ENCODE measurements at regions of chr2 and their contacts with region 1.

Region 1: GRCh38 chr2:96856776-96857673 is 791 bp downstream of the ANKRD39 start:
- DNase-seq: no peak
- H3K4me3 Mint-ChIP-seq: peak overlapping the region; percentile 60
- H3K27ac Mint-ChIP-seq: peak overlapping the region; percentile 49
- H3K4me1 Mint-ChIP-seq: peaks cover 14% of the 10 kb centered on the region
- H3K27me3 Mint-ChIP-seq: no peaks in the 10 kb centered on the region
- CTCF ChIP-seq: no peak

Region 2: GRCh38 chr2:96099861-96100798 is 756.9 kb before region 1 on chr2:
- CTCF ChIA-PET with region 1: no interaction called
- POLR2A ChIA-PET with region 1: no interaction called
- intact Hi-C with region 1: no loop called
- DNase-seq: no peak
- H3K4me3 Mint-ChIP-seq: no peak overlapping the region
- H3K27ac Mint-ChIP-seq: no peak overlapping the region
- H3K4me1 Mint-ChIP-seq: no peaks in the 10 kb centered on the region
- H3K27me3 Mint-ChIP-seq: no peaks in the 10 kb centered on the region
- CTCF ChIP-seq: no peak

Region 3: GRCh38 chr2:96792772-96793749 is 64.0 kb before region 1 on chr2:
- CTCF ChIA-PET with region 1: no interaction called
- POLR2A ChIA-PET with region 1: no interaction called
- intact Hi-C with region 1: no loop called
- DNase-seq: no peak
- H3K4me3 Mint-ChIP-seq: no peak overlapping the region
- H3K27ac Mint-ChIP-seq: no peak overlapping the region
- H3K4me1 Mint-ChIP-seq: peaks cover 12% of the 10 kb centered on the region
- H3K27me3 Mint-ChIP-seq: no peaks in the 10 kb centered on the region
- CTCF ChIP-seq: no peak

Region 4: GRCh38 chr2:96832754-96833507 is 24.1 kb before region 1 on chr2:
- CTCF ChIA-PET with region 1: interaction called, 11 read pairs
- POLR2A ChIA-PET with region 1: interaction called, 4 read pairs
- intact Hi-C with region 1: no loop called
- DNase-seq: peak; percentile 43
- H3K4me3 Mint-ChIP-seq: no peak overlapping the region
- H3K27ac Mint-ChIP-seq: peak overlapping the region; percentile 39
- H3K4me1 Mint-ChIP-seq: peaks cover 7% of the 10 kb centered on the region
- H3K27me3 Mint-ChIP-seq: no peaks in the 10 kb centered on the region
- CTCF ChIP-seq: no peak

Region 5: DNA sequence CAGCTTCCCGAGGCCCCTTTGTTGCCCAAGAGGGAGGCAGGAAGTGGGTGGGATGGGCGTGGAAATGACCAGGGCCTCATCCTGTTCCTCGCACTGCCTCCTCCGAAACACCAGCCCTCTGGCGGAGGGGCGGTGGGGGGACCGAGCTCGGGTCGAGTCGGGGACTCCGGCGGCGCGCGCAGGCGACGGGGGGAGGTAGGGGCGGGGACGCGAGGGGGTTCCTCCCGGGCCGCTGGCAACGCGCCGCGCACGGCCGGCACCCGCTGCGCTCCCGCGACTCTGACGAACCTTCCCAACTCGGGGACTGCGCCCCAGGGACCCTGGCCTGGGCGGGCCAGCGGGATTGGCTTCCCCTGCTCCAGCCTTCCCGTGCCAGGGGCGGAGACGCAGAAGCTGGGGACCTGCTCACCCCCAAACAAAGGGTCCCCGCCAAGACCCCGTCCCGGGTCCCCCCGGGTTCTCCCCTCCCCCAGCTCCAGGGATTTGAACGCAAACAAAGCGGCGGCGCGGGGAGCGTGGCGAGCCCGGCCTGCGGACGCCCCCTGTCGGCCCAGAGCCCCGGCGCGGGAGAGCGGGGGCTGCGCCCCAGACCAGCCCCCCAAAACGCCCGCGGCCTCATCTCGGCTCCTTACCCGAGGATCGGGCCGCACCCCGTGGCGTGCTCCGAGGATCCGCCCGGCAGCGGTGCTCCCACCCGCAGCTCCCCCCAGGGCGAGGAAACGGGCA is 11.7 kb after region 1 on chr2:
- CTCF ChIA-PET with region 1: interaction called, 30 read pairs
- POLR2A ChIA-PET with region 1: interaction called, 53 read pairs
- intact Hi-C with region 1: no loop called
- DNase-seq: peak; percentile 87
- H3K4me3 Mint-ChIP-seq: peak overlapping the region; percentile 78
- H3K27ac Mint-ChIP-seq: peak overlapping the region; percentile 63
- H3K4me1 Mint-ChIP-seq: peaks cover 5% of the 10 kb centered on the region
- H3K27me3 Mint-ChIP-seq: no peaks in the 10 kb centered on the region
- CTCF ChIP-seq: peak; percentile 82

Region 6: GRCh38 chr2:96874118-96874831 is 17.2 kb after region 1 on chr2:
- CTCF ChIA-PET with region 1: interaction called, 30 read pairs
- POLR2A ChIA-PET with region 1: interaction called, 53 read pairs
- intact Hi-C with region 1: no loop called
- DNase-seq: no peak
- H3K4me3 Mint-ChIP-seq: no peak overlapping the region
- H3K27ac Mint-ChIP-seq: no peak overlapping the region
- H3K4me1 Mint-ChIP-seq: no peaks in the 10 kb centered on the region
- H3K27me3 Mint-ChIP-seq: no peaks in the 10 kb centered on the region
- CTCF ChIP-seq: no peak

Region 7: GRCh38 chr2:96916156-96916630 is 59.2 kb after region 1 on chr2:
- CTCF ChIA-PET with region 1: interaction called, 10 read pairs
- POLR2A ChIA-PET with region 1: interaction called, 7 read pairs
- intact Hi-C with region 1: no loop called
- DNase-seq: peak; percentile 51
- H3K4me3 Mint-ChIP-seq: peak overlapping the region; percentile 63
- H3K27ac Mint-ChIP-seq: no peak overlapping the region
- H3K4me1 Mint-ChIP-seq: peaks cover 34% of the 10 kb centered on the region
- H3K27me3 Mint-ChIP-seq: peaks cover 18% of the 10 kb centered on the region
- CTCF ChIP-seq: no peak

Region 8: GRCh38 chr2:96940001-96940615 is 83.1 kb after region 1 on chr2:
- CTCF ChIA-PET with region 1: interaction called, 11 read pairs
- POLR2A ChIA-PET with region 1: interaction called, 3 read pairs
- intact Hi-C with region 1: no loop called
- DNase-seq: no peak
- H3K4me3 Mint-ChIP-seq: no peak overlapping the region
- H3K27ac Mint-ChIP-seq: no peak overlapping the region
- H3K4me1 Mint-ChIP-seq: no peaks in the 10 kb centered on the region
- H3K27me3 Mint-ChIP-seq: peaks cover 13% of the 10 kb centered on the region
- CTCF ChIP-seq: no peak

Region 9: GRCh38 chr2:96960153-96960961 is 103.3 kb after region 1 on chr2:
- CTCF ChIA-PET with region 1: interaction called, 36 read pairs
- POLR2A ChIA-PET with region 1: interaction called, 3 read pairs
- intact Hi-C with region 1: loop called (anchors 2 kb)
- DNase-seq: peak; percentile 83
- H3K4me3 Mint-ChIP-seq: no peak overlapping the region
- H3K27ac Mint-ChIP-seq: no peak overlapping the region
- H3K4me1 Mint-ChIP-seq: no peaks in the 10 kb centered on the region
- H3K27me3 Mint-ChIP-seq: no peaks in the 10 kb centered on the region
- CTCF ChIP-seq: peak; percentile 94

Measured in MCF 10A (cell line).